ENCODE measurements at regions of chr3 and their contacts with region 1.

Region 1: GRCh38 chr3:150414959-150415358 is 6.9 kb downstream of the TSC22D2 start:
- DNase-seq: no peak
- ATAC-seq: no peak
- H3K4me3 ChIP-seq: peak overlapping the region in 8 of 12 donors; percentile 71 to 92 (median 84)
- H3K27ac ChIP-seq: peak overlapping the region in 2 of 12 donors; percentile 12 to 27
- H3K4me1 ChIP-seq: peaks cover 9 to 86% (median 64%) of the 10 kb centered on the region in 12 donors
- H3K27me3 ChIP-seq: no peaks in the 10 kb centered on the region
- CTCF ChIP-seq: no peak
- POLR2A ChIP-seq: no peak

Region 2: GRCh38 chr3:150428562-150428961 is 13.6 kb after region 1 on chr3:
- intact Hi-C with region 1: no loop called
- DNase-seq: no peak
- ATAC-seq: no peak
- H3K4me3 ChIP-seq: no peak overlapping the region
- H3K27ac ChIP-seq: no peak overlapping the region
- H3K4me1 ChIP-seq: peaks cover 0 to 67% (median 44%) of the 10 kb centered on the region in 12 donors
- H3K27me3 ChIP-seq: no peaks in the 10 kb centered on the region
- CTCF ChIP-seq: no peak
- POLR2A ChIP-seq: no peak

Region 3: DNA sequence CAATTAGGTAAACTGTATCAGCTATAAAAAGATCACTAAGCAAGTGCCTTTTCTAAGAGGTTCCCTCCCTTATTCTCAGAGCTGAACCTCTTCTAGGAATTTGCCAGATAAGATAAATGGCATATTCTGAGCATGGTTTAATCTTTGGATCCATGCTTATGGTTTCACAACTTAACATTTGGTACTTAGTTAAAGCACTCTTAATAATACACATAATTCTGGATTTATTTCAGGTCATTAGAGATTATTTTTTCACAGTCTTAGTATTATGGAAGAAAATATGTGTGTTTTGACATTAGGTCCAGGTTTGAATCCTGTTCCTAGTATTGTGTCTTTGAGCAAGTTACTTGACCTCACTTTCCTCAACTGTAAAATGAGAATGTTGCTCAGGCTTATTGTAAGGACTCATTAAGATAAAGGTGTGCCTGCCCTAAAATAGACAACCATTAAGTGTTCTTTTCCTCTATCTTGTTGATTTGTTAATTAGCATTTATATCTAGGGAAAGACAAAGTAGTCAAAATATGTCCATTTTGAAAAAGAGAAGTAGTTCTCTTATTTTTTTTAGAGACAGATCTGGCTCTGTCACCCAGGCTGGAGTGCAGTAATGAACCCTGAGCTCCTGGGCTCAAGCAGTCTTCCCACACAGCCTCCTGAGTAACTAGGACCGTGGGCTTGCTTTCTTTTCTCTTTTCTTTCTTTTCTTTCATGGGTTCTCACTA is 36.5 kb after region 1 on chr3:
- intact Hi-C with region 1: loop called in 4 of 10 experiments (anchors 5 kb)
- DNase-seq: no peak
- ATAC-seq: peak in 1 of 4 donors; percentile 41
- H3K4me3 ChIP-seq: no peak overlapping the region
- H3K27ac ChIP-seq: peak overlapping the region in 3 of 12 donors; percentile 4 to 28 (median 16)
- H3K4me1 ChIP-seq: peaks cover 7 to 73% (median 40%) of the 10 kb centered on the region in 12 donors
- H3K27me3 ChIP-seq: no peaks in the 10 kb centered on the region
- CTCF ChIP-seq: no peak
- POLR2A ChIP-seq: no peak

Region 4: DNA sequence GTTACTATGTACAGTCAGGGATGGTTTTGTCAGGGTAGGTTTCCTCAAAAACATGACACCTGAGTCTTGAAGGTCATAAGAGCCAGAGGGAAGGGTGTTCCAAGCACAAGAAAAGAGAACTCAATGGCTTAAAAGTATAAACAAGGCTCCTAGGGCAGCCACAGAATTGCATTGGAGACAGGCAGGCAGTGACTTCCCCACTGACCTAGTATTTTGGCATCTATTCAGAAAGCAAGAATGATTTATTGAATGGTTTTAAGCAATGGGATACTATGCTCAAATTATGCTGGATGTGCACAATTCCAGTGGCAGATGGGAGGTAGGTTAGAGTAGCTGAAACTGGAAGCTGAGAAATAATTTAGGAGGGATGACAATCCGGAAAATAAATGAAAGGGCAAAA is 47.1 kb after region 1 on chr3:
- intact Hi-C with region 1: loop called in 1 of 10 experiments (anchors 5 kb)
- DNase-seq: no peak
- ATAC-seq: peak in 1 of 4 donors; percentile 20
- H3K4me3 ChIP-seq: no peak overlapping the region
- H3K27ac ChIP-seq: no peak overlapping the region
- H3K4me1 ChIP-seq: peaks cover 0 to 5% (median 0%) of the 10 kb centered on the region in 12 donors
- H3K27me3 ChIP-seq: no peaks in the 10 kb centered on the region
- CTCF ChIP-seq: no peak
- POLR2A ChIP-seq: no peak

Region 5: DNA sequence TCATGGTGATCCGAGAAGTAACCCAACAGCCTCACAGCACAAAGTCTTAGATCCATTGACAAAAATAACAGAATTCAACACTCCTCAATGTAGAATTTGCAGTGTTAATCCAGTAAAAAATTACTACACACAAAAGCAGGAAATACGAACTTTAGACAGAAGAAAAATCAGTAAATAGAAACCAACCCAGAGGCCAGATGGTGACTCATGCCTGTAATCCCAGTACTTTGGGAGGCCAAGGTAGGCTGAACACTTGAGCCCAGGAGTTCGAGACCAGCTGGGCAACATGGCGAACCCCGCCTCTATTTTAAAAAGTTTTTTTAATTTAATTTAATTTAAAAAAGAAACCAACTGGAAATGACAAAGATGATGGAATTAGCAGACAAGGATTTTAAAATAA is 224.3 kb after region 1 on chr3:
- intact Hi-C with region 1: no loop called
- DNase-seq: no peak
- ATAC-seq: no peak
- H3K4me3 ChIP-seq: no peak overlapping the region
- H3K27ac ChIP-seq: no peak overlapping the region
- H3K4me1 ChIP-seq: peaks cover 0 to 9% (median 0%) of the 10 kb centered on the region in 12 donors
- H3K27me3 ChIP-seq: no peaks in the 10 kb centered on the region
- CTCF ChIP-seq: no peak
- POLR2A ChIP-seq: no peak